Activated CD4-positive, alpha-beta T cell treated with anti-CD3 and anti-CD28 coated beads, Interleukin-2, amount 10 ng/mL, durations not matched to agents 7 days and 5 days (primary cell): ENCODE measurements at regions of chrX and their contacts with region 1.

Region 1: GRCh38 chrX:131802835-131803626 is 220.1 kb upstream of the STK26 start:
- DNase-seq: no peak
- H3K4me3 Mint-ChIP-seq: no peak overlapping the region
- H3K27ac Mint-ChIP-seq: no peak overlapping the region
- H3K4me1 Mint-ChIP-seq: no peaks in the 10 kb centered on the region
- H3K27me3 Mint-ChIP-seq: no peaks in the 10 kb centered on the region

Region 2: DNA sequence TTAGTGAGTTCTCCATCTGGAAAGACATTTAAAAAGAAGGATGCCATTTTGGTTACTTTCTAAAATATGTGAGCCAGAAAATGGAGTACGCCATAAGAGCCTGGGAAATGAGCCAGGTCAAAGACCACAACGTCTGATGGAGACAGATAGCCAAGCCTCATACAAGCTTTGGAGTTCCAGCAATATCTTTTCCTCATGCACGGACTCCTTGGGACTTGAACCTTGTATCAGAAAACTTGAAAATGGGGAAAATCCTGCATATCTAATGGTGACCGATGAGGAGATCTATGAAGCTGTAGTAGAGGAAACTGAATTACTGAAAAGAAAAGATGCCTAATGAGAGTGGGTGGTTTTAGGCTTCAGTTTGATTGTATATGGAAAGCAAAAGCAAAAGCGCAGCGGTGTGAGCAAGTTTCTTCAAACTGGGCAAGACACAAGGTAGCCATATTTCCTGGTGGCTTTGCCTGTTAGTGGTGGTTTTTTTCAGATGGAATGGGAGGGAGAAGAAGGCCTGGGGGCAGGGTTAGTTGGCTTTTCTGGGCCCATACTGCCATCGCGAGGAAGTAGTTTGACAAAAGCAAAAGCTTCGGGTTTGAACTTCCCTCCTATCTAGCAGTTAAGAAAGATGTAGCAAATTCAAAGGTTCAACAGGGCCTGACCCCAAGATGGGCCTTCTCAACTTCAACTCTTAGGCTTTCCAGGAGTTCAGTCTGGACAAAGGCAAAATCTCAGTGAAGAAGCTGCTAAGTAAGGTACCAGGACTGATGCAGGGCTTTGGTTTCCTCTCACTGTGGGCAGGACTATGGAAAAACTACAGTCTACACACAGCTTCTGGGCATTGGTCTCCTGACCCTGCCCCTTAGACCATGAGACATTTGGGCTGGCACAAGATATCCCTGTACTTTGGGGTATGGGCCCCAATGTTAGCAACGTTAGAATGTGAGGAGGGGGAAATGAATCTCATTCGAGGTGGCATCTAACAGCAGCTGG is 10.1 kb after region 1 on chrX:
- CTCF ChIA-PET with region 1: interaction called, 25 read pairs
- POLR2A ChIA-PET with region 1: no interaction called
- DNase-seq: peak; percentile 82
- H3K4me3 Mint-ChIP-seq: peak overlapping the region; percentile 75
- H3K27ac Mint-ChIP-seq: peak overlapping the region; percentile 97
- H3K4me1 Mint-ChIP-seq: peaks cover 34% of the 10 kb centered on the region
- H3K27me3 Mint-ChIP-seq: no peaks in the 10 kb centered on the region

Region 3: GRCh38 chrX:131836161-131836560 is 33.1 kb after region 1 on chrX:
- CTCF ChIA-PET with region 1: no interaction called
- POLR2A ChIA-PET with region 1: no interaction called
- DNase-seq: no peak
- H3K4me3 Mint-ChIP-seq: no peak overlapping the region
- H3K27ac Mint-ChIP-seq: no peak overlapping the region
- H3K4me1 Mint-ChIP-seq: peaks cover 14% of the 10 kb centered on the region
- H3K27me3 Mint-ChIP-seq: no peaks in the 10 kb centered on the region

Region 4: DNA sequence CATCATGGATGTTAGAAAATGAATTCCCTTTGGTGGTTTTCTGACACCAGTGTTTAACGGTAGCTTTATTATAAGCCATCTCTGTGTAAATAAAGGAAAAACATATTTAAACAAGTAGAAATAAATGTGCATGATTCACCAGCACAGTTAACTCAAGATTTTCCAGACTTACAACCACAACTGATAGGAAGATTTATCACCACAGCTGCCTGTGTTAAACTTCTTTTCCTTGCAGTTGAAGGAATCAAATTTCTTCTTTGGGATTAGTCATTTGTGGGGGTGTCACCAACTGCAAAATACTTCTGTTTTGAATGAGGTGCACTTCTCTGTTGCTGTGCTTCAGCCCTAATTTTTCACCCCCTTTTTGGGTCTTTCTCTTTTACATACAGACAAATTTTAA is 92.0 kb after region 1 on chrX:
- CTCF ChIA-PET with region 1: no interaction called
- POLR2A ChIA-PET with region 1: no interaction called
- DNase-seq: no peak
- H3K4me3 Mint-ChIP-seq: no peak overlapping the region
- H3K27ac Mint-ChIP-seq: no peak overlapping the region
- H3K4me1 Mint-ChIP-seq: no peaks in the 10 kb centered on the region
- H3K27me3 Mint-ChIP-seq: no peaks in the 10 kb centered on the region

Region 5: DNA sequence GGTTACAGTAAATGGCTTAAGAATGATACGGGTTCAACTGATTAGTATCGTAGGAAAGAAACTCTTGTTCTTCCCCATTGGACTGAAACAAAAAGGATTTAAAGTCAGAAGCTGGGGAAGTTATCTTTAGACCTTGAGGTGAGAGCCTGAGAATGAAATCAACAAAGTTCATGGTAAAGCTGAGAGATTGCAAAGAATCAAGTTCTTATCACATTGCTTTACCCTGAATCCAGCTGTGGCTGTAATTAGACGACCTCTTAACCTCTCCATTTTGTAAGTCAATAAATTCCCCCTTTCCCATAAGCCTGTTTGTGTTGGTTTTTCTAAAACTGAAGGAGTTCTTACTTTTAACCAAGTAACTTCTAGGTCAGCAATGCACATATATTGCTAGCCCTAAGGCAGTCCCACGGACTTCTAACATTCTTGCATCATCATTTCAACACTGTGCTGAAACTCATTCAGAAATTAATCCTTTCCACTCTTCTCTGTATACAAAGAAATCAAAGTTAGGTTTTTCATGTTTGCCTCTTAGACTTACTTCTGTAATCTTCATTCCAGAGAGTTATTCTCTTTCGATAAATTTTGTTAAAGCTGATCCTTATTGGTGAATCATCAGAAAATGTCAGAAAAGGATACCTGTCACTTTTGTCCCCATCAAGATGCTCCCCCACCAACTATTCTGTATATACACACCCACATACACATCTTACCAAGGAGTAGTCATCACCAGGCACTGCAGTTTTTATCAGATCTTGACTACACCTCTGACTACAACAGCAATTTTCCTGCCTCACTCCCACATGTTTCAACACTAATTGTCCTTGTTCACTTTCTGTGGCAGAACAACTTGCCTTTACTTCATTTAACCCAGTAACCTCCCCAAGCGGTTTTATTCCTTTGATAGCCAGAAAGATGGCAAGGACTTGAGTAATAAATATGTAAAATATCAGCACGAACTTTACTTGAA is 142.2 kb after region 1 on chrX:
- CTCF ChIA-PET with region 1: no interaction called
- POLR2A ChIA-PET with region 1: no interaction called
- DNase-seq: no peak
- H3K4me3 Mint-ChIP-seq: no peak overlapping the region
- H3K27ac Mint-ChIP-seq: no peak overlapping the region
- H3K4me1 Mint-ChIP-seq: no peaks in the 10 kb centered on the region
- H3K27me3 Mint-ChIP-seq: no peaks in the 10 kb centered on the region